Thyroid gland (tissue), 4 donors: ENCODE measurements at regions of chr2 and their contacts with region 1.

Region 1: DNA sequence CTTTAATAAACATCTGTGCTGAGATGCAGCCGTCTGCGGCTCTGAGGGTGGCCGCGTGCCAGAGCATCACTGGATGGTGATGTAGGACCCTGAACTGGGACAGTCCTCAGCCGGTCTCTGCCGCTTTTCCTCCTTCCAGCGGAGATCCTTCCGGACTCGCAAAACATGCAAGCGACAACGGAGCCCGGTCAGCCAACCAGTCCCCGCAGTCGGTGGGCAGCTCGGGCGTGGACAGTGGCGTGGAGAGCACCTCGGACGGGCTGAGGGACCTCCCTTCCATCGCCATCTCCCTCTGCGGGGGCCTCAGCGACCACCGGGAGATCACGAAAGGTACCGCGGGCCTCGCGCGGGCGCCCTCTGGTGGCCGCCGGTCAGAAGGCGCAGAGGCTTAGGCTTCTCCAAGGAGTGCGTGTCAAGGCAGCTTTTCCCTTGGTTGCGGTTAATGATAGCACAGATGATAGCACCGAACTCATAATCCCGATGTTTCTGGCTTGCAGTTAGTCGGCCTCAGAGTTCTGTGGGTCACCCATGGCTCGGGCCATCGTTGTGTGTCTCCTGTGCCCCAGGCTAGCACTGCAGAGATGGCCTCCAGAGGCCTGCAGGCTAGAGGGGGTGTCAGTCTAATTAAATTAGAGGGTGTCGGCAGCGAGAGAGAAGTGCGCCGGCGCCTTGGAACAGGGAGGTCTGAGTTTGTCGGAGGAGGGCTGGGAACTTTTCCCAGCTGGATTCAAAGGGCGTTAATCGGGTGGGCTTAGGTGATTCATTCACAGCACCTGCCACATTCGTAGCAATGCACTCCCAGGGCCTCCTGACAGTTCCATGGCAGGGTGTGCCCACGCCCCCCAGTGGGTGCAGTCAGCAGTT is 38.5 kb downstream of the LPIN1 start:
- DNase-seq: peak; percentile 32 to 41
- H3K4me3 ChIP-seq: no peak overlapping the region
- H3K27ac ChIP-seq: no peak overlapping the region
- H3K4me1 ChIP-seq: no peaks in the 10 kb centered on the region
- H3K27me3 ChIP-seq: no peaks in the 10 kb centered on the region
- CTCF ChIP-seq: peak; percentile 57 to 99 (median 81)
- POLR2A ChIP-seq: no peak

Region 2: GRCh38 chr2:11482723-11483518 is 302.1 kb before region 1 on chr2:
- intact Hi-C with region 1: no loop called
- DNase-seq: peak in 1 of 2 donors; percentile 18
- H3K4me3 ChIP-seq: peak overlapping the region in 1 of 3 donors; percentile 31
- H3K27ac ChIP-seq: no peak overlapping the region
- H3K4me1 ChIP-seq: peaks cover 3 to 16% of the 10 kb centered on the region in 2 donors
- H3K27me3 ChIP-seq: peaks cover 9% of the 10 kb centered on the region
- CTCF ChIP-seq: no peak
- POLR2A ChIP-seq: no peak

Region 3: GRCh38 chr2:11621410-11621809 is 163.6 kb before region 1 on chr2:
- intact Hi-C with region 1: no loop called
- DNase-seq: no peak
- H3K4me3 ChIP-seq: no peak overlapping the region
- H3K27ac ChIP-seq: no peak overlapping the region
- H3K4me1 ChIP-seq: no peaks in the 10 kb centered on the region
- H3K27me3 ChIP-seq: no peaks in the 10 kb centered on the region
- CTCF ChIP-seq: no peak
- POLR2A ChIP-seq: no peak

Region 4: DNA sequence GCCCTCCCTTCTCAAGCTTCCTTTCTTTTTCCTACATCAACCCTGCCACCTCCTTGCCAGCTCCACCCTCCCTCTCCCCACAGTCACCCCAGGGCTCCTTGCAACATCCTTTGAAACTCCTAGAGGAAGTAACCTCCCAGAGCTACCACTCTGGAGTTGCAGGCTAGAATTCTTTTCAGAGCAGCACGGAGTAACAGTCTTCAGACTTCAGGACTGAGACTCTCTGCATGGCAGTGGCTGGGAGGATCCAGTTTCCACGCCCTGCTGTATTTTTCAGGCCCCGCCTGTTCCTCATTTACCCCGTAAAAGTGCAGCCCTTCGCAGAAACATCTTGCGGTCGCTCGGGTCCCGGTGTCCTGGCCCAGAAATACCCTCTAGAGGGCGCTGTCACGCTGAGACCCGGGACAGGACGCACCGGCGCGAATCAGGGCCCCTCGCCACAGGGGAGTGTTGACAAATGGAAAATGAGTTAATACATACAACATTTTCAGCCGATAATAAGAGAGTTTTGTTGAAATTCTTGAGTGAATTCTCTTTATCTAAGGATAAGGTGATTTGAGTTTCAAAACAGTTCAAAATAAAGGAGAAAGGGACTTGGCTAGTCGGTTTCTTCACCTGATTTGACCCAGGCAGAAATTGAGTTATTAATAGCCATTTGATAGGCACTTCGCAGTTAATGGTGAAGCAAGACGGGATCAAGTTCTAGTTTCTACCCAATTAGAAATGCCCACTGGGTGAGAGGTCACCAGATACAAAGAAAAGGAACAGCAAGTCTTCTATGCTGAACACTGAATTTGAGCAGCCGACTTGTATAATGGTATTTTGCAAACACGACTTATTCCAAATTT is 96.5 kb before region 1 on chr2:
- intact Hi-C with region 1: loop called (anchors 5 kb)
- DNase-seq: peak; percentile 74 to 86
- H3K4me3 ChIP-seq: no peak overlapping the region
- H3K27ac ChIP-seq: peak overlapping the region in 1 of 3 donors; percentile 13
- H3K4me1 ChIP-seq: peaks cover 19 to 20% of the 10 kb centered on the region in 2 donors
- H3K27me3 ChIP-seq: no peaks in the 10 kb centered on the region
- CTCF ChIP-seq: peak; percentile 64 to 87 (median 71)
- POLR2A ChIP-seq: no peak

Region 5: DNA sequence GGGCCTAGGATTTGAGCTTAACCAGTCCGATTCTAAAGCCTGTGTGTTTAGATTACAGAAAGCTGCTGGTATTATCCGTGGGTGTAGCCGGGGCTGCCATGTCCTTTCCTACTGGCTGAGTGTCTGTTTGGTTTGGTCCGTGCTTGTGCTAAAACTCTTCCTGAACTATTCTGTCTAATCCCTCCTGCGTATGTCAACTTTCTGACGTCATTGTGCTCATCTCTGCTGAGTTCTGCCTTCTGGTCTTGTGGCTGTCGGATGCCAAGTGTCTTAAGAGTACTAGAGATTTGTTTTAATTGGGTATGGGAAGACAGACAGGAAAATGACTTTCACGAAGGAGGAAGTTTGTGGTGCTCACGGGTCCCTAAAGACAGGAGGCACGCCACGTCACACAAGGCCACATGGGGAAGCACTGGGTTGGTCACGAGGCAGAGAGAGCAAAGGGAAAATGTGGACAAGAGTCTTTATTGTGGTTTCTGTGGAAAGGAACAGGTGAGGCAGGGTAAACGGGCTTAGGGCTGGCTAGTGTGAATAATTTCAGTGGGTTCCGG is 83.2 kb before region 1 on chr2:
- intact Hi-C with region 1: no loop called
- DNase-seq: no peak
- H3K4me3 ChIP-seq: no peak overlapping the region
- H3K27ac ChIP-seq: no peak overlapping the region
- H3K4me1 ChIP-seq: peaks cover 4 to 11% of the 10 kb centered on the region in 2 donors
- H3K27me3 ChIP-seq: no peaks in the 10 kb centered on the region
- CTCF ChIP-seq: no peak
- POLR2A ChIP-seq: no peak

Region 6: GRCh38 chr2:11743846-11744553 is 41.0 kb before region 1 on chr2:
- intact Hi-C with region 1: loop called (anchors 5 kb)
- DNase-seq: peak; percentile 97 to 98
- H3K4me3 ChIP-seq: no peak overlapping the region
- H3K27ac ChIP-seq: peak overlapping the region; percentile 67 to 81 (median 78)
- H3K4me1 ChIP-seq: peaks cover 31 to 47% of the 10 kb centered on the region in 2 donors
- H3K27me3 ChIP-seq: no peaks in the 10 kb centered on the region
- CTCF ChIP-seq: peak in 1 of 6 experiments; percentile 18
- POLR2A ChIP-seq: peak in 1 of 2 donors; percentile 41